ENCODE measurements at regions of chr21 and their contacts with region 1.

Region 1: GRCh38 chr21:34603002-34603709 is 11.8 kb downstream of the RCAN1 start:
- DNase-seq: no peak
- H3K4me3 ChIP-seq: no peak overlapping the region
- CTCF ChIP-seq: peak; percentile 89

Region 2: DNA sequence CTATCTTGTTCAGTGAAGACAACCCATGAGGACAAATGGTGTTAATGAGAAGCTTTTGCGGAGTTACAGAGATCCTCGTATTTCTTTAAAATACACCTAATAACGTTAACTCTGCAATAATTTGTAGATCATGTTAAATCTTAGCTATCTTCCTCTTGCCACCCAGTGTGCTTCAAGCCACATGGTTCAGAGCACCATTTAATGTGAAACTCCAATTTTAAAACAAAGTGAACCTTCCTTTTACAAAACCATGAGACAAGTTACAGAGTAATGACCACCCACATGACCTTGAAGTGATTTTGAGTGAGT is 241.1 kb before region 1 on chr21:
- CTCF ChIA-PET with region 1: interaction called, 24 read pairs
- POLR2A ChIA-PET with region 1: no interaction called
- DNase-seq: no peak
- H3K4me3 ChIP-seq: no peak overlapping the region
- CTCF ChIP-seq: no peak

Region 3: DNA sequence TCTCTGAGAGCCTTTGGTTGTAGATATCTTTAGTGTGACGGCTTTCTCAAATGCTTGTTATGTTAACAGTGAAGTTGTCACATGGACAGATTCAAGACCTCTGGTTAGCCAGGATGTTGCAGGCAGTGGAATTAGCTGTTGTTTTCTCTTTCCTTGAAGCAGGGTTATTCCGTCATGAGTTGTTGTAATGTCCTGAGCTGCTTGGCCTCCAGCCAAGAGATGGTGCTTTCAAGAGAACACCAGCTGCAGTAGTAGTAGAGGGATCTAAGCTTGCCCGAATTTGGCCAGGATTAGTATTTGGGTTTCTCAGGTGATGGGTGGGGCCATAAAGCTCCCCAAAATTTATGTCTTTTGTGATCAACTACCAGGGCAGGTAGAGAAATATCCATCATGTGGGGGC is 104.5 kb before region 1 on chr21:
- CTCF ChIA-PET with region 1: interaction called, 26 read pairs
- POLR2A ChIA-PET with region 1: no interaction called
- DNase-seq: no peak
- H3K4me3 ChIP-seq: no peak overlapping the region
- CTCF ChIP-seq: no peak

Region 4: DNA sequence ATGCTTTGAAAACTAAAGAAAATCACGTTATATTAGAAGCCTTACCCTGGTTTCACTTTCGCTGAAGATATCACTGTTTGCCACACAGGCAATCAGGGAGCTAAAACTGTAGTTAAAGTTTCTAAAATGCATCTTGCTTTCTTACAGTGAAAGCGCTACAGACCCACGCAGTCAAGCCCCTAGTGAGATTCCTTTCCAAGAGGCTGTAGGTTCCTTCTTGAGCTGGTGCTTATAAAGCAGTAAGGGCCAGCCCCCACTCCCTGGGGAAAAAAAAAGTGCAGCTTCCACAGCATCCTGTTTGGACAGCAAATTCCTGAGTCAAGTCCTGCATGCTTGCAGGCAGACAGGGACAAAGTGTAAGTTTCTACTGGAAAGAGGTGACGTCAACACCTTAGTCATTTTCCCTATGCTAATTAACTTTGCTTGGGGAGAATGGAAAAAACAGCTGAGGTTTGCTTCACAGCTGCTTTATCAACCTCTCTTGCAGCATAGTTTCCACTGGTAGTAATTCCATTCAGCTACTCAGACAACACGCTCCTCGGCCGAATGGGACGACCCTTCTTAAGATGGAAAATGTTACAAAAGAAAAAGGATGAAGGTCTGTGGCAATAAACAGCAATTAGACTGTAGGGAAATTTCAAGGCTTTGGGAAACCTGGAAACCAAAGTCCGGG is 76.4 kb before region 1 on chr21:
- CTCF ChIA-PET with region 1: interaction called, 158 read pairs
- POLR2A ChIA-PET with region 1: interaction called, 6 read pairs
- DNase-seq: peak; percentile 100
- H3K4me3 ChIP-seq: peak overlapping the region; percentile 67
- CTCF ChIP-seq: no peak

Region 5: GRCh38 chr21:34582506-34583150 is 20.5 kb before region 1 on chr21:
- CTCF ChIA-PET with region 1: interaction called, 44 read pairs
- POLR2A ChIA-PET with region 1: interaction called, 3 read pairs
- DNase-seq: no peak
- H3K4me3 ChIP-seq: no peak overlapping the region
- CTCF ChIP-seq: peak; percentile 66

Region 6: DNA sequence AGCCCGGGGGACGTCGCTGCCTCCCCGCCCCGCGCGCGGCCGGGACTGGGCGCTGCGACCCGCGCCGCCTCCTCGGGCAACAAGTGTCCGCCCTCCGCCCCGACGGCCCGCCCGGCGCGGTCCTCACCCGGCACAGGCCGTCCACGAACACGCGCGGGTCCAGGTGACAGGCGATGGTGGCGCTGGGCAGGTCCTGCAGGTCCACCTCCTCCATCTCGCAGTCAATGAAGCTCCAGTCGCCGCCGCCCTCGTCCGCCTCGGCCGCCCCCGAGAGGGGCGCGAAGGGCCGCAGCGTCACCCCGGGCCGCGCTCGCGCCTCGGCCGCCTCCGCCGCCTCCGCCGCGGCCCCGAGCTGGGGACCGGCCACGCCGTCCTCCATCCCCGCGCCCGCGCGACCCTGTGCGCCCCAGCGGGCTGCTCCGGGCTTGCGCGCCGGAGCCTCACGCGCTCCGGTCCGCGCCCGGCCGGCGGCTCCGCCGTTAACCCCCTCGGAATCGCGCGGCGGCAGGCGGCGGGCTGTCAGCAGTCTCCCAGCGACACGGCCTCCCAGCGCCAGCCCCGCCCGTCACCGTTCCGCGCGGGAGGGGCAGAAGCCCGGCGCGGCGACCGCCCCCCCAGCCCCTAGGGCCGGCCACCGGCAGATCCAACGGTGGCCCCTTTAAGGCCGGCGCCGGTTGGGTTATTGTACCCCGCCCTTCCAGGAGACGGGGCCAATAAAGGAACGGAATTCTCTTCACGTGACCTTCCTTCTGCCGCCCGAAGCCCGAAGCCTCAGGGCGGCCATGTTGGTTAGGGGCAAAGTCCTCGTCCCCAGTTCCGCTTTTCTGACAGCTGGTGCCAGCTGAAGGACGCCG is 11.7 kb after region 1 on chr21 and contains the start of gene RCAN1:
- CTCF ChIA-PET with region 1: interaction called, 125 read pairs
- POLR2A ChIA-PET with region 1: no interaction called
- DNase-seq: peak; percentile 51
- H3K4me3 ChIP-seq: peak within 1 kb of the TSS; percentile 71
- CTCF ChIP-seq: no peak

Region 7: DNA sequence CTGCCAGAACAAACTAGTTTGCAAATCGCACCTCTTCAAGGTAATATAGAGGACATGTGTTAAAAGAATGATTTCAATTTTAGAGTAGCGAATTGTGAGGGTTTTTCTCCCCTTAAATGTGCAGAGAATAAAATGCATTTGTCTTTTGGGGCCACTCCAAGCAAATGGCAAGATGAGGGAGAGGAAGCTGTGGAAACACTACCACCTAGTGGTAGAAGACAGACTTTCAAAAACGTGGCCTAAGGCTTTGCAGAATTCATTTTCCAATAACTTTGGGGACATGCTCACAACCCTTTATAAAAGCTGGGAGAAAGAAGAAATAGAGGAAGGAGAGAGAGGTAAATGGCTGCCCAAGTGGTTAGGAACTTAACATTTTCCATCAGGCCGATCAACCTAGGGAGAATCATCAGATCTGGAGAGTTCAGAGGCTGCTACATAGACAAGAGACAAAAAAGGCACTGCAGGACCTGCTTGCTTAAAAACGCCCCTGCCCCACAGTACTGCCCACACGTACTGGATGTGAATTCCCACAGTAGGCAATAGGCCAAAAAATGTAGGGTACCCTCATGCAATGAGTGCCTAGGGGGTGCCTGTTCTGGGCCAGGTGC is 27.5 kb after region 1 on chr21:
- CTCF ChIA-PET with region 1: interaction called, 50 read pairs
- POLR2A ChIA-PET with region 1: no interaction called
- DNase-seq: no peak
- H3K4me3 ChIP-seq: no peak overlapping the region
- CTCF ChIP-seq: peak; percentile 63

Measured in AG04449 (cell line).